ENCODE measurements at regions of chr22 and their contacts with region 1.

Region 1: DNA sequence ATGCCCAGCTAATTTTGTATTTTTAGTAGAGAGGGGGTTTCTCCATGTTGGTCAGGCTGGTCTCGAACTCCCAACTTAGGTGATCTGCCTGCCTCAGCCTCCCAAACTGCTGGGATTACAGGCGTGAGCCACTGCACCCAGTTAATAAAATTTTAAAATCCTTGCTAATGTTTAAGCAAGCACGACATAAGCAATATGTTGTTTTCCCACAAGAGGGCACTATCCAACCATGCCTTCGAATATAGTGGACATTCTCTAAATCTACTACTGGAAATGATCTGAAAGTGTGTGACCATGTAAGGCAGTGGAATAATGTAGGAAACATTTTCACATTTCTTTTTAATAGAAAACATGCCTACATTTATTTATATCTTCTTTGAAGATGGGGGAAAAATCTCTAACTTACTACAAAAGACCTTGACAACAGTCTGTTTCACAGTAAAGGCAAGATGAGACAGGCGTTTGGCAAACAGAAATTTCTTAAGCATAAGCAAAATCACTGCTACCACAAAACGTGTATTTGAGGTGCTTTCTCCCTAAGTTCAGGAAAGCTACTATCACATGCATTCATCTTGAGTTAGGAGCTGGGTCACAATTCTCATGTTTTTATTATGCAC is 38.2 kb downstream of the PITPNB start:
- DNase-seq: peak; percentile 17
- ATAC-seq: no peak
- H3K4me3 Mint-ChIP-seq: no peak overlapping the region
- H3K27ac Mint-ChIP-seq: no peak overlapping the region
- H3K4me1 Mint-ChIP-seq: peaks cover 24% of the 10 kb centered on the region
- H3K27me3 Mint-ChIP-seq: no peaks in the 10 kb centered on the region

Region 2: DNA sequence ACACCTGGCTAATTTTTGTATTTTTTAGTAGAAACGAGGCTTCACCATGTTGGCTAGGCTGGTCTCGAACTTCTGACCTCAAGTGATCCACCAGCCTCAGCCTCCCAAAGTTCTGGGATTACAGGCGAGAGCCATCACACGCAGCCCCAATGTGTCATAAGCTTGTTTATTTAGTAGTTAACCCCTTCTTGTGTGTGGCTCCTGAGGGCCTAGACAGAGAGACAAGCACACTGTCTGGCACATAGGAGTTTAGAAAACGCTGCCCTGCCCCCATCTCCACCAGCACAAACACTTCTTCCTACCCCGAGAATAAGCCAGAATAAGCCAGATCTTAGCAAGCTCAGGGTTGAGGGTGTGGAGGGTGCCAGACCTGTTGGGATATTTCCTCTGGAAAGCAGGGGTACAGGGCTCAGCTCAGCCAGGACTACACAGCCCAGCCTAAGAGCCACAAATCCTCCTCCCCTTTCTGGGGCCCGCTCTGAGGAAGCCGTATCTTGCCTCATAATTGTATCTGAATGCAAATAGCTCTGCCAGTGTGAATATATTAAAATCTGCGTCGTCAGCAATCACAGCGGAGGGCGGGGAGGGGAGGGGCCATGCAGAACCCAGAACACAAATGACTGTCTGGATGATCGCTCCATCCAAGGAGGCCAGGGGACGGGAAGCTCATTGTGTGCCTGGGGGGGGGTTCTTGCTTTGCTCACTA is 326.6 kb before region 1 on chr22:
- CTCF ChIA-PET with region 1: no interaction called
- POLR2A ChIA-PET with region 1: no interaction called
- intact Hi-C with region 1: no loop called
- DNase-seq: no peak
- ATAC-seq: no peak
- H3K4me3 Mint-ChIP-seq: no peak overlapping the region
- H3K27ac Mint-ChIP-seq: no peak overlapping the region
- H3K4me1 Mint-ChIP-seq: no peaks in the 10 kb centered on the region
- H3K27me3 Mint-ChIP-seq: no peaks in the 10 kb centered on the region

Region 3: GRCh38 chr22:27597703-27598444 is 283.0 kb before region 1 on chr22:
- CTCF ChIA-PET with region 1: no interaction called
- POLR2A ChIA-PET with region 1: no interaction called
- intact Hi-C with region 1: no loop called
- DNase-seq: peak; percentile 10
- ATAC-seq: no peak
- H3K4me3 Mint-ChIP-seq: no peak overlapping the region
- H3K27ac Mint-ChIP-seq: no peak overlapping the region
- H3K4me1 Mint-ChIP-seq: no peaks in the 10 kb centered on the region
- H3K27me3 Mint-ChIP-seq: peaks cover 5% of the 10 kb centered on the region

Region 4: GRCh38 chr22:27825174-27825573 is 55.7 kb before region 1 on chr22:
- CTCF ChIA-PET with region 1: no interaction called
- POLR2A ChIA-PET with region 1: no interaction called
- intact Hi-C with region 1: no loop called
- DNase-seq: peak; percentile 60
- ATAC-seq: peak; percentile 30
- H3K4me3 Mint-ChIP-seq: no peak overlapping the region
- H3K27ac Mint-ChIP-seq: no peak overlapping the region
- H3K4me1 Mint-ChIP-seq: no peaks in the 10 kb centered on the region
- H3K27me3 Mint-ChIP-seq: no peaks in the 10 kb centered on the region

Region 5: GRCh38 chr22:27859228-27859681 is 21.6 kb before region 1 on chr22:
- CTCF ChIA-PET with region 1: interaction called, 13 read pairs
- POLR2A ChIA-PET with region 1: no interaction called
- intact Hi-C with region 1: no loop called
- DNase-seq: no peak
- ATAC-seq: no peak
- H3K4me3 Mint-ChIP-seq: no peak overlapping the region
- H3K27ac Mint-ChIP-seq: no peak overlapping the region
- H3K4me1 Mint-ChIP-seq: no peaks in the 10 kb centered on the region
- H3K27me3 Mint-ChIP-seq: no peaks in the 10 kb centered on the region

Region 6: DNA sequence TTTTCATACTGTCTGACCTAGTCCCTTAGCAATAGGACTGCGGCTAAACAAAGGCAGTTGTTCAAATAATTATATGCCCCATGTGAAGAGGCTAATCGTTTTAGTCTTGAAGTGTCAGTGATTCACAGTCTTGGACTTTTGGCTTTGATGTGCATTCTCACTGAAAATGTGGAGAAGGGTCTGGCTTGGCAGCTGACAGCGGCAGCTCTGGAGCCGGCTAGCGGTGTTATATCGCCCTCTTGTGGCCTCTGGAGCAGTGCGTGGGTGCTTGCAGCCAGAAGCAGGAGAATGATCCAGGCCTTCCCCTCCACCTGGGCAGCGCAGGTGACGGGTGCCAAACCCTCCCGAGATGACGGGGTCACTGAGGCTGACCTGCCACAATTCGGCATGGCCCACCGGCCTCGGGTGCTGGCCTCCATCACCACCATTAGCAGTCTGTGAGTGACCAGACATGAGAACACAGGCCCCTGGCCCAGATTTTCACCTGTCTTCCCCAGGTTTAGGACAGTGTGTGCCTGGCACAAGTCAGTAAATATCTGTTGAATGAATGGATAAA is 128.5 kb after region 1 on chr22:
- CTCF ChIA-PET with region 1: interaction called, 19 read pairs
- POLR2A ChIA-PET with region 1: interaction called, 4 read pairs
- intact Hi-C with region 1: loop called (anchors 1 kb)
- DNase-seq: peak; percentile 88
- ATAC-seq: peak; percentile 85
- H3K4me3 Mint-ChIP-seq: no peak overlapping the region
- H3K27ac Mint-ChIP-seq: no peak overlapping the region
- H3K4me1 Mint-ChIP-seq: no peaks in the 10 kb centered on the region
- H3K27me3 Mint-ChIP-seq: no peaks in the 10 kb centered on the region

Region 7: GRCh38 chr22:28594797-28595462 is 714.0 kb after region 1 on chr22:
- CTCF ChIA-PET with region 1: no interaction called
- POLR2A ChIA-PET with region 1: no interaction called
- intact Hi-C with region 1: loop called in 1 of 2 experiments (anchors 10 kb)
- DNase-seq: no peak
- ATAC-seq: peak; percentile 65
- H3K4me3 Mint-ChIP-seq: no peak overlapping the region
- H3K27ac Mint-ChIP-seq: no peak overlapping the region
- H3K4me1 Mint-ChIP-seq: no peaks in the 10 kb centered on the region
- H3K27me3 Mint-ChIP-seq: peaks cover 6% of the 10 kb centered on the region

Measured in activated CD4-positive, alpha-beta T cell treated with anti-CD3 and anti-CD28 coated beads for 36 hours (primary cell).